Lower lobe of right lung (tissue), 2 donors: ENCODE measurements at regions of chr14 and their contacts with region 1.

Region 1: DNA sequence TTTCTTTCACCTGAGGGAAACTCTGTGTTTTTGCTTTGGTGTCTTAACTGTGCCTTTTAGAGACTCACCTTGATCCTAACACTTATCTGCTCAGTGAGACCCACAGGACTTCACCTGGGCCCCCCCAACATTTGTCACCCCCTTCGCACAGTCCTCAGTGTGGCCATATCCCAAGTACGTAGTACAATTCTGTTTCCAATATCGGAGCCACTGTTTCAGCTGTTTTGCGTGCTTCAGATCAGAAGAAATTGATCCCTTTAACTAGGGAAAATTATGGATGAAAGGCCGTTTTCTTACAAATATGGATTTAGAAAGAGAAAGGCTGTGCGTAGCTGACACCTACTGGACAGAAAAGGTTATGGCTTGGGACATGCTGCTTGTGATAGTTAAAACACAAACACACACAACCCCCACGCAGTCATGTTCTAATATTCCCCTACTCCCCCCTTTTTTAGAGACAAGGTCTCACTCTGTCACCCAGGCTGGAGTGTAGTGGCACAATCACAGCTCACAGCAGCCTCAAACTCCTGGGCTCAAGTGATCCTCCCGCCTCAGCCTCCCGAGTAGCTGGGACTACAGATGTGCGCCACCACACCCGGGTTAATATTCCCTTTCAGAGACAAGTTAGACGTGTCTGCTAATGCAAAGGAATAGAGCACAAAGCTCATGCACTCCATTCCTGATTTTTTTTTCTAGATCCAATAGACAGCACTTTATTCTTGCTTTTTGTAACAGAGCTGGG is 3.6 kb upstream of the SLC7A8 start:
- DNase-seq: no peak
- ATAC-seq: peak; percentile 73 to 74
- H3K4me3 ChIP-seq: no peak overlapping the region
- H3K27ac ChIP-seq: no peak overlapping the region
- H3K4me1 ChIP-seq: peaks cover 5% of the 10 kb centered on the region
- H3K27me3 ChIP-seq: no peaks in the 10 kb centered on the region
- CTCF ChIP-seq: peak; percentile 74

Region 2: GRCh38 chr14:23120541-23121251 is 66.4 kb before region 1 on chr14:
- intact Hi-C with region 1: loop called (anchors 5 kb)
- DNase-seq: peak; percentile 92
- ATAC-seq: peak; percentile 88 to 94
- H3K4me3 ChIP-seq: no peak overlapping the region
- H3K27ac ChIP-seq: peak overlapping the region; percentile 68
- H3K4me1 ChIP-seq: peaks cover 13% of the 10 kb centered on the region
- H3K27me3 ChIP-seq: no peaks in the 10 kb centered on the region
- CTCF ChIP-seq: peak; percentile 100